ENCODE measurements at regions of chr9 and their contacts with region 1.

Region 1: DNA sequence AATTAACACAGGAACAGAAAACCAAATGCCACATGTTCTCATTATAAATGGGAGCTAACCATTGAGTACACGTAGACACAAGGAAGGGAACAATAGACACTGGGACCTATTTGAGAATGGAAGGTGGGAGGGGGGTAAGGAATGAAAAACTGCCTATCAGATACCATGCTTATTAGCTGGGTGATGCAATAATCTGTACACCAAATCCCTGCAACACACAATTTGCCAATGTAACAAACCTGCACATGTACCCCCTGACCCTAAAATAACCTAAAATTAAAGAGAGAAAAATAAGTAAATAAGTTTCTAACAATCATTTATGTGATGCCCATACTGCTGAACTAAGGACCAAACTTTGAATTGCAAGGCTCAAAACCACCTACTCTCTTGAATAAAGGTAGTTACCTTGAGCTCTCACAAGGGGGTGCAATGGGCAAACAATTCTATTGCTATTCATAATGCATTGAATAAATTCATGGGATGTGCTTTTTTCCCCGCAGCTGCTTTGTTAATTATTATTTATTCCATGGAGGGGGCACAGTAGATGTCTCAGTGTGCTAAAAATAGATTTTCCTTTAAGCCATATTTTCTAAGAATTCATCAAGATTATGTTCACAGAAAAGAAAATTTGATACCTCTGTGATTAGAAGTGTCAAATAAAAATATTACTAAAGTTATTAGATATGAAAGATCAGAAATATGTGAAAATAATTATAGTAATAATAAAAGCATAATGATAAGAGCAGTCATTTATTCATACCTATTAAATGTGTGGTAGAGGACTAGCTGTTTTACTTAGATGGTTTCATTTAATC is 76.2 kb upstream of the PTPN3 start:
- DNase-seq: peak; percentile 47
- H3K4me3 ChIP-seq: no peak overlapping the region
- H3K27ac ChIP-seq: no peak overlapping the region
- H3K4me1 ChIP-seq: no peaks in the 10 kb centered on the region
- H3K27me3 ChIP-seq: no peaks in the 10 kb centered on the region
- CTCF ChIP-seq: peak; percentile 38

Region 2: DNA sequence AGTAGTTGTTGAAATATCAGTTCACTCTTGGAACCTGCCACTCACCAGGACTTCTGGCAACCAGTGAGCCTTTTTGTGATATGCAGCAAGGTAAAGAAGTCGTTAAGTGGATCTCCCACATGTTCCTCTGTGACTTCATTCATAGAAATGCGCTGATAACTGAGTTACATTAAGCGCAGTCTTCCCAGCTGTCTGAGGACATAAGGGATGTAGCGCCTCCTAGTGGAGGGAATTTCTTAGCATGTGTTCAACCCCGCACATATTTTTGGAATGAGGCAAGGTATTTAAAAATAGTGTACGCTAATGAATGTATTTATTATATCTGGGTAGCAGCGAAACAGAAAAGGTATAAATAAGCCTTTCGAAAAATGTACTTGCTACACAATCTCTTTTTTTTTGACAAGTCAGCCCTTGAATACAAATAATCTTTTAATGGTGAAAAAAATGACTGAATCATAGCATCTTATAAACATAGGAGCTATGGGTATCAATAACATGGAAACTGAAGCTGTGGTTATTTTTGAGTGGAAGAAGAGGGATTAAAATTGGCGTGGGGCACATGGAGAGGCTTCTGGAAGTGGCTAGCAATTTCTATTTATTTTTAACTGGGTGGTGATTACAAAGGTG is 243.7 kb after region 1 on chr9:
- intact Hi-C with region 1: loop called (anchors 2 kb)
- DNase-seq: peak; percentile 76
- H3K4me3 ChIP-seq: no peak overlapping the region
- H3K27ac ChIP-seq: no peak overlapping the region
- H3K4me1 ChIP-seq: no peaks in the 10 kb centered on the region
- H3K27me3 ChIP-seq: no peaks in the 10 kb centered on the region
- CTCF ChIP-seq: peak; percentile 79